Right ventricle myocardium superior (tissue), 1 donor: ENCODE measurements at regions of chr21 and their contacts with region 1.

Region 1: GRCh38 chr21:43797925-43798715 is 8.7 kb downstream of the RRP1 start:
- DNase-seq: no peak
- ATAC-seq: no peak

Region 2: GRCh38 chr21:43842742-43843141 is 44.6 kb after region 1 on chr21:
- intact Hi-C with region 1: loop called (anchors 5 kb)
- DNase-seq: no peak
- ATAC-seq: no peak